Endothelial cell of umbilical vein (primary cell): ENCODE measurements at regions of chr4 and their contacts with region 1.

Region 1: DNA sequence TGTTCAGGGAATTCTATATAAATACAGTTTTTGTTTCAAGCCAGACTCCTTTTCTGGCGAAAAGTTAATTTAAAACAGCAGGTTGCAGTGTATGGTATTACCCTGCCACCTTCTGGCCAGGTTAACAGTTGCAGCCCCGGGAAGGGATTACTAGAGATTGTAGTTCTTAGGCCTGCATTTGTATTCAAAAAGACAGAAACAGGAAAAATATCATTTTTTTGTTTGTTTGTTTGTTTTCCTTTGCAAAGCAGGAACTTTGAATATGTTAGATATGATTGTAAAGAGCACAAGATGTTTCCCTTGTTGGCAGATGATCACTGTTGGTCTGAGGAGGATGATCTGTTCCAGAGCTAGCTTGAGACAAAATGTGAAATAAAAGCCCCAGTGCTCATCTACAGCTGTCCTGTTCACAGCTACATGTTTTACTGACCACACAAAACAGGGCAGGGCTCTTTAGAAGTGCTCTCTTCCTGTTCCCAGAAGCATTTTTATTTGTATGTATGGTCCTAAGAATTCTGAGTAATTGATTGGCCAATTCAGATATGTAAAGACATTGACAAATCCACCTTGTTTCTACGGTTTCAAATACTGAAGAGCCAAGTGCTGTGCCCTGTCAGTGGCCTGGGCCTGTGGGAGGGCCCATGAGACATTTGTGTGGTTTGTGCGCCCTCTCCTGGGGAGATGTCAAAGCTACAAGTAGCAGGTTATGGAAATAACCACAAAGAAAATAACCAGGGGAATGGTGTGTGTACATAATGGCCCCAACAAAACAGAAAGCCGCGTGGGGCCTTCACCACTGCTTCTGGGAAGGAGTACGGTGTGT is 57.9 kb downstream of the CLDN22 start:
- DNase-seq: peak; percentile 74
- H3K4me3 ChIP-seq: no peak overlapping the region
- H3K27ac ChIP-seq: peak overlapping the region; percentile 16
- H3K4me1 ChIP-seq: no peaks in the 10 kb centered on the region
- H3K27me3 ChIP-seq: no peaks in the 10 kb centered on the region
- CTCF ChIP-seq: peak; percentile 76 to 85
- POLR2A ChIP-seq: no peak

Region 2: GRCh38 chr4:182917182-182918043 is 344.8 kb before region 1 on chr4 and contains the start of gene DCTD:
- CTCF ChIA-PET with region 1: interaction called, 5 read pairs
- POLR2A ChIA-PET with region 1: no interaction called
- dilution Hi-C with region 1: loop called (anchors 25 kb)
- intact Hi-C with region 1: no loop called
- DNase-seq: peak; percentile 60
- H3K4me3 ChIP-seq: peak within 1 kb of the TSS; percentile 63 to 76 (median 70)
- H3K27ac ChIP-seq: peak within 1 kb of the TSS; percentile 82
- H3K4me1 ChIP-seq: peaks cover 16% of the 10 kb centered on the region
- H3K27me3 ChIP-seq: peaks cover 2 to 9% of the 10 kb centered on the region in 2 experiments
- CTCF ChIP-seq: peak; percentile 38 to 63
- POLR2A ChIP-seq: peak; percentile 21
- total RNA-seq, gene DCTD: 106 and 111 TPM in 2 replicates

Region 3: GRCh38 chr4:182925298-182925738 is 336.8 kb before region 1 on chr4:
- CTCF ChIA-PET with region 1: interaction called, 39 read pairs
- POLR2A ChIA-PET with region 1: no interaction called
- dilution Hi-C with region 1: loop called (anchors 25 kb)
- intact Hi-C with region 1: no loop called
- DNase-seq: peak; percentile 69
- H3K4me3 ChIP-seq: no peak overlapping the region
- H3K27ac ChIP-seq: no peak overlapping the region
- H3K4me1 ChIP-seq: no peaks in the 10 kb centered on the region
- H3K27me3 ChIP-seq: peaks cover 13 to 38% of the 10 kb centered on the region in 2 experiments
- CTCF ChIP-seq: peak; percentile 28 to 53
- POLR2A ChIP-seq: no peak

Region 4: DNA sequence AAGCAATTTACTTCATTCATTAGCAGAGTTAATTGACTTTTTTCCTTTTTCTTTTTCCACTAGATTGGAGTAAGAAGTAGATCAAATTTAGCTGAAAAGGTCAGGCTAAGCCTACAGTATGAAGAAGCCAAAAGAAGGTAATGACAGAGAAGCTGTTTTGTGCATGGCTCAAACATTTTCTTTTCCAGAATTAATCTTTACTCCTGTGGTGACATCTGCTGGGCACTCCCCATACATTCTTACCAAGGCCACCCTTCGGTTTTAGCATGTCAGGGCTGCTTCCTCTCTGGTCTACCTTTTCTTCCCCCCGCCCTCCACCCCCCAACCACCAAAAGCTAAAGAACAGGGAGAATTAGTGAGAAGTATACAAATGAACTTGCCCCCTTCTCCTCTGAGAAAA is 12.3 kb before region 1 on chr4:
- CTCF ChIA-PET with region 1: interaction called, 14 read pairs
- POLR2A ChIA-PET with region 1: no interaction called
- dilution Hi-C with region 1: no loop called
- intact Hi-C with region 1: no loop called
- DNase-seq: peak; percentile 52
- H3K4me3 ChIP-seq: no peak overlapping the region
- H3K27ac ChIP-seq: no peak overlapping the region
- H3K4me1 ChIP-seq: no peaks in the 10 kb centered on the region
- H3K27me3 ChIP-seq: no peaks in the 10 kb centered on the region
- CTCF ChIP-seq: peak; percentile 11 to 33
- POLR2A ChIP-seq: no peak

Region 5: GRCh38 chr4:183362916-183363542 is 100.9 kb after region 1 on chr4:
- CTCF ChIA-PET with region 1: interaction called, 33 read pairs
- POLR2A ChIA-PET with region 1: no interaction called
- dilution Hi-C with region 1: no loop called
- intact Hi-C with region 1: loop called (anchors 1 kb)
- DNase-seq: peak; percentile 52
- H3K4me3 ChIP-seq: no peak overlapping the region
- H3K27ac ChIP-seq: no peak overlapping the region
- H3K4me1 ChIP-seq: peaks cover 8% of the 10 kb centered on the region
- H3K27me3 ChIP-seq: no peaks in the 10 kb centered on the region
- CTCF ChIP-seq: peak in 1 of 2 donors; percentile 34
- POLR2A ChIP-seq: no peak

Region 6: GRCh38 chr4:183398227-183399125 is 136.3 kb after region 1 on chr4:
- CTCF ChIA-PET with region 1: interaction called, 10 read pairs
- POLR2A ChIA-PET with region 1: no interaction called
- dilution Hi-C with region 1: no loop called
- intact Hi-C with region 1: loop called (anchors 2 kb)
- DNase-seq: peak; percentile 79
- H3K4me3 ChIP-seq: peak overlapping the region; percentile 8 to 43 (median 36)
- H3K27ac ChIP-seq: no peak overlapping the region
- H3K4me1 ChIP-seq: peaks cover 6% of the 10 kb centered on the region
- H3K27me3 ChIP-seq: no peaks in the 10 kb centered on the region
- CTCF ChIP-seq: peak; percentile 52 to 84
- POLR2A ChIP-seq: peak; percentile 33

Region 7: GRCh38 chr4:183407128-183407585 is 145.0 kb after region 1 on chr4:
- CTCF ChIA-PET with region 1: interaction called, 28 read pairs
- POLR2A ChIA-PET with region 1: no interaction called
- dilution Hi-C with region 1: no loop called
- intact Hi-C with region 1: loop called (anchors 1 kb)
- DNase-seq: peak; percentile 90
- H3K4me3 ChIP-seq: peak overlapping the region; percentile 28 to 70 (median 33)
- H3K27ac ChIP-seq: peak overlapping the region; percentile 39
- H3K4me1 ChIP-seq: peaks cover 7% of the 10 kb centered on the region
- H3K27me3 ChIP-seq: no peaks in the 10 kb centered on the region
- CTCF ChIP-seq: peak; percentile 91 to 96
- POLR2A ChIP-seq: no peak